Transverse colon (tissue), 4 donors: ENCODE measurements at regions of chr9 and their contacts with region 1.

Region 1: DNA sequence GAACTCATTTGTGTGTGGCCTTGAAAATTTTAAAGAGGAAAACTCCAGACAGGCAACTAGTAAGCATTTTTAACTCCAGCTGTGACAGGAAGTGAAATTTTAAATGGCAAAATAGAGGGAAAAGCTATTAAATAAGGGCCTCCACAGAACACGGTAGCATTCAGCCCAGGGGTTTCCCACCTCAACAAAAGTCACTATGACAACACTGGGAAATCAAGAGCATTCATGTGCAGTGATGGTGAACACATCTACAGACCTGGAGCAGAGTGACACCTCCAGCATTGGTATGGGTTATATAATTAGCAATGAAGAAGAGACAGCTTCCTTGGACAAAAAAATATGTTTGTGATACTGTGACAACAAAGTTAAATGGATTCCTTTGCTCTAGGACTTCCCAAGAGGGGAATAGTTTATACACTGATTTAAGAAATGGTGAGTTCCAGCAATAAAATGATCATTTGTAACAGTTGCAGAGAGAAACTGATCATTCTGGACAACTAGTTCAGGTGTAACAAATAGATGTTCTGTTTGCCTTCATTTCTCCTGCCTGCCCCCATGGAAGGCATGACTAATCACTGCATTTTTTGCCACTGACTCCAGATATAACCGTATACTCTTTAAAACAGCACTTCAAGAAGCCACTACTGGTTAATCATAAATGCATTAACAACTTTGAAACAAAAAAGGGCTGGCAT is 93.3 kb upstream of the SLC44A1 start:
- DNase-seq: no peak
- H3K4me3 ChIP-seq: no peak overlapping the region
- H3K27ac ChIP-seq: no peak overlapping the region
- H3K4me1 ChIP-seq: peaks cover 0 to 8% (median 5%) of the 10 kb centered on the region in 4 donors
- H3K27me3 ChIP-seq: no peaks in the 10 kb centered on the region
- CTCF ChIP-seq: no peak
- EP300 ChIP-seq: no peak
- POLR2A ChIP-seq: no peak

Region 2: DNA sequence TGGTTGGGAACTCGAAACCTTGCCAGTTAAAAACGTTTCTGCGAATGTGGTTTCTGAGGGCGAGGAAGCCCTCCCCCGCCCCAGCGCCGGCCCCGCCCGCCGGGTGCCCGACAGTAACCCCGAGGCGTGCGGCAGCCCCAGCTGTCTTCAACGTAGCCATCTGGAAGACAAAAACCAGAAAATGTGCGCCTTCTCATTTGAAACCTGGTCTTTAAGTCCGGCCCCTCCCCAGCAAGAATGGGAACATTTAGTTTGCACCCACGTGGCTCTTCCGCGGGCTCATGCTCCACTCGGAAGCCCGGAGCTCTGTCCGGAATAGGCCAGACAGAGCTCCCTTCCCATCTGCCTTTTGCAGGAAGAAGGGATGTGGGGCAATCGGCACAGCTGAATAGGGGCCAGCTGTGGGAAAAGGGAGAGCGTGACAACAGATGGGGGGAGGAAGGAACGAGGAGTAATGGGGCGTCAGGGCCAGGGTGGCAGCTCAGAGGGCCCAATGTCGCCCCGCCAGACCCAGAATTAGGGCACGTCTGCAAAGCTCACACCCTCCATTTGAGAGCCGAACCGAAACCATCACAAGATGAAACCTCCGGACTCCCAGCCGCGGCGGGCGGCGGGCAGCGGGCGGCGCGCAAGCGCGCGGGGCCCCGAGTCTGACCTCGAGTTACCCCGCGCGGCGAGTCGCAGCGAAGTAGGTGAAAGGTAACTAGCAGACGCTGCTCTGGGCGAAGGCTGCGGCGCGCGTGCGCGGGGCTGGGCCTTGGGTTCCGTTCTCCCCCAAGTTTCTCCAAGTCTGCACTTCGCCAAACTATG is 159.8 kb before region 1 on chr9:
- in situ Hi-C with region 1: no loop called
- intact Hi-C with region 1: loop called (anchors 2 kb)
- DNase-seq: peak; percentile 95
- H3K4me3 ChIP-seq: peak overlapping the region; percentile 50 to 79 (median 61)
- H3K27ac ChIP-seq: peak overlapping the region; percentile 94 to 98 (median 97)
- H3K4me1 ChIP-seq: peaks cover 25 to 36% (median 33%) of the 10 kb centered on the region in 4 donors
- H3K27me3 ChIP-seq: no peaks in the 10 kb centered on the region
- CTCF ChIP-seq: no peak
- EP300 ChIP-seq: peak; percentile 70
- POLR2A ChIP-seq: peak; percentile 64